CD8-positive, alpha-beta T cell (primary cell): ENCODE measurements at regions of chr17 and their contacts with region 1.

Region 1: DNA sequence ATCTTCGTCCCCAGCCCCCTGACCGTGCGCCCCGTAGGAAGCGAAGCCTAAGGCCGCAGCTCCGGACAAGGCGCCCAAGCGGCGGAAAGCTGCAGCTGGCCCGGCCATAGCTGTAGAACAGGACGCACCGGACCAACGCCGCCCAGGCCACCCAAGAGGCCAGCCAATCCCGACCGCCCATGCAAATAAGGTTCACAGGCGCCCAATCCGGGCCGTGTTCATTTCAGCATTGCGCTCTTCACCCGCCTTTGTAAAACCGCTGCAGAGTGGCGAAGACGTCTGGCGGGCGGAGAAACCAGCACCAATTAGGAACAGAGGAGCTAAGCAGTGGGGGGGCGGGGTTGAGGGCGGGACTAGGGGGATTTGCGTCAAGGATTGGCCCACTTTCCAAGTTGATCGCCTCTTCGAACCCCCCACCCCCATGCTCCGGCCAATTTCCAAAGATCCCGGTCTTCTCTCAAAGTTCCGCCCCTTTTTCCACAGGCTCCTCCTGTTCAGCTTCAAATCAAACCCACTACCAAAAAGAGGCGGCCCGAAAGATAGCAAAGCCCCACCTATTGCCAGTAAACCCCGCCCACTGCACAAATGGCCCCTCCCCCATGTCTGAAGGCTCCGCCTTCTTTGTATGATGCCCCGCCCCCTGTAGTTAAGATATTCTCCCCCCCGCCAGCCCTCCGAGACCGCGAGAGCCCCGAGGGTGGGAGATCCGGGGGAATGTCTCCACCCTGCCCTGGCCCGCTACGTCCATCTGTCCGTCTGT is at the start of gene TMEM256:
- DNase-seq: peak; percentile 90 to 99 (median 94)
- ATAC-seq: peak; percentile 83
- H3K4me3 ChIP-seq: peak within 1 kb of the TSS; percentile 75 to 83
- H3K4me3 Mint-ChIP-seq: peak within 1 kb of the TSS; percentile 95
- H3K27ac ChIP-seq: peak within 1 kb of the TSS; percentile 61 to 81
- H3K27ac Mint-ChIP-seq: peak within 1 kb of the TSS; percentile 96
- H3K4me1 ChIP-seq: peaks cover 24% of the 10 kb centered on the region
- H3K4me1 Mint-ChIP-seq: peaks cover 31% of the 10 kb centered on the region
- H3K27me3 ChIP-seq: no peaks in the 10 kb centered on the region
- H3K27me3 Mint-ChIP-seq: no peaks in the 10 kb centered on the region
- CTCF ChIP-seq: no peak
- total RNA-seq, gene TMEM256: 27.1 to 29.1 TPM

Region 2: DNA sequence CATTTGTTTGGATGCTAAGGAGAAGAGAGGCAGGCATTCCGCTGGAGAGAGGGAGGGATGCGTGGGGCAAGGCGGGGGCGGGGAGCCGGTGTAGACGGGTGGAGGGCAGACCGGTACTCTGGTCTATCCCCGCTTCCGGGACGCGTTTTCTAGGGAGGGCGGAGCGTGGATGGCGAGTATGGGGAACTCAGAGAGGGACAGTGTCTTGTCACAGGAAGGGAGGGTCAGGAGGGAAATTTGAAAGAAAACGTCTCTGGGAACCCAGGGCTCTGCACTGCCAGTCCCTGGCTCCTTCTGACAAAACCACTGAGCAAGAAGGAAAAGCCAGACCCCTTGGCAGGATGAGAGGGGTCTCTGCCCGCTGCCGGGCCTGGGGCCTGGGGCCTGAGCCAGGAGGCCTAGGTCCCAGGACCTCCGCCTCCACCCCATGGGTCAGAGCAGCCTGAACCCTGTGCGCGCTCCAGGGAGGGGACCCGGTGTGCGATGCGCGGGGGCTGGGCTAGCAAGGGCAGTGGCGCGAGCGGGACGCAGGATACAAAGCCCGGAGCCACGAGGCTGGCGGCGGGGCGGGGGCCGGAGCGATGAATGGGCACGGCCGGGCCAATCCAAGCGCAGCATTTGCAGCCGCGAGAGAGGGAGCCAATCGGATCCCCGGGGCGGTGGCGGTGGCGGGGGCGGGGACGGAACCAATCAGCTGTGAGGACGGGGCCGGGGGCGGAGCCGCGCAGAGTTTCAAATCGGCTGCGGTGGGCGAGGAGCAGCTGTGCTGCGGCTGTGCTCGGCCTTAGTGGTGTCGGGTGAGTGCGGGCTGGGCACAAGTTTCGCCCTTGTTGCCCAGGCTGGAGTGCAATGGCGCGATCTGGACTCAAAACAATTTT is 960.2 kb before region 1 on chr17 and contains the start of gene PIMREG:
- CTCF ChIA-PET with region 1: no interaction called
- POLR2A ChIA-PET with region 1: no interaction called
- intact Hi-C with region 1: loop called in 1 of 2 experiments (anchors 10 kb)
- DNase-seq: peak; percentile 79 to 91 (median 90)
- ATAC-seq: peak; percentile 96
- H3K4me3 ChIP-seq: peak within 1 kb of the TSS; percentile 68 to 94
- H3K4me3 Mint-ChIP-seq: peak within 1 kb of the TSS; percentile 85
- H3K27ac ChIP-seq: peak within 1 kb of the TSS; percentile 25 to 37
- H3K27ac Mint-ChIP-seq: peak within 1 kb of the TSS; percentile 77
- H3K4me1 ChIP-seq: peaks cover 6% of the 10 kb centered on the region
- H3K4me1 Mint-ChIP-seq: peaks cover 12% of the 10 kb centered on the region
- H3K27me3 ChIP-seq: no peaks in the 10 kb centered on the region
- H3K27me3 Mint-ChIP-seq: peaks cover 10% of the 10 kb centered on the region
- CTCF ChIP-seq: no peak
- total RNA-seq, gene PIMREG: not detected

Region 3: GRCh38 chr17:7045909-7046724 is 358.0 kb before region 1 on chr17:
- CTCF ChIA-PET with region 1: no interaction called
- POLR2A ChIA-PET with region 1: no interaction called
- intact Hi-C with region 1: no loop called
- DNase-seq: peak in 6 of 9 experiments; percentile 43 to 88 (median 59)
- ATAC-seq: peak; percentile 34
- H3K4me3 ChIP-seq: peak overlapping the region; percentile 42 to 58
- H3K4me3 Mint-ChIP-seq: peak overlapping the region; percentile 79
- H3K27ac ChIP-seq: peak overlapping the region; percentile 47 to 73
- H3K27ac Mint-ChIP-seq: peak overlapping the region; percentile 88
- H3K4me1 ChIP-seq: peaks cover 35% of the 10 kb centered on the region
- H3K4me1 Mint-ChIP-seq: peaks cover 36% of the 10 kb centered on the region
- H3K27me3 ChIP-seq: no peaks in the 10 kb centered on the region
- H3K27me3 Mint-ChIP-seq: no peaks in the 10 kb centered on the region
- CTCF ChIP-seq: peak; percentile 89

Region 4: GRCh38 chr17:7329374-7329996 is 74.7 kb before region 1 on chr17:
- CTCF ChIA-PET with region 1: no interaction called
- POLR2A ChIA-PET with region 1: interaction called, 4 read pairs
- intact Hi-C with region 1: loop called in 1 of 2 experiments (anchors 1 kb)
- DNase-seq: peak; percentile 92 to 99 (median 96)
- ATAC-seq: peak; percentile 79
- H3K4me3 ChIP-seq: peak overlapping the region; percentile 96 to 100
- H3K4me3 Mint-ChIP-seq: peak overlapping the region; percentile 98
- H3K27ac ChIP-seq: peak overlapping the region; percentile 80 to 95
- H3K27ac Mint-ChIP-seq: peak overlapping the region; percentile 96
- H3K4me1 ChIP-seq: peaks cover 36% of the 10 kb centered on the region
- H3K4me1 Mint-ChIP-seq: peaks cover 37% of the 10 kb centered on the region
- H3K27me3 ChIP-seq: no peaks in the 10 kb centered on the region
- H3K27me3 Mint-ChIP-seq: no peaks in the 10 kb centered on the region
- CTCF ChIP-seq: no peak

Region 5: GRCh38 chr17:7383742-7384488 is 20.2 kb before region 1 on chr17:
- CTCF ChIA-PET with region 1: interaction called, 4 read pairs
- POLR2A ChIA-PET with region 1: interaction called, 16 read pairs
- intact Hi-C with region 1: loop called (anchors 1 kb)
- DNase-seq: peak; percentile 60 to 91 (median 80)
- ATAC-seq: peak; percentile 94
- H3K4me3 ChIP-seq: peak overlapping the region; percentile 66 to 75
- H3K4me3 Mint-ChIP-seq: peak overlapping the region; percentile 88
- H3K27ac ChIP-seq: peak overlapping the region; percentile 80 to 92
- H3K27ac Mint-ChIP-seq: peak overlapping the region; percentile 96
- H3K4me1 ChIP-seq: peaks cover 21% of the 10 kb centered on the region
- H3K4me1 Mint-ChIP-seq: peaks cover 8% of the 10 kb centered on the region
- H3K27me3 ChIP-seq: peaks cover 12 to 14% of the 10 kb centered on the region in 2 experiments
- H3K27me3 Mint-ChIP-seq: peaks cover 29% of the 10 kb centered on the region
- CTCF ChIP-seq: no peak